WTC11 (cell line): ENCODE measurements at regions of chr2 and their contacts with region 1.

Region 1: DNA sequence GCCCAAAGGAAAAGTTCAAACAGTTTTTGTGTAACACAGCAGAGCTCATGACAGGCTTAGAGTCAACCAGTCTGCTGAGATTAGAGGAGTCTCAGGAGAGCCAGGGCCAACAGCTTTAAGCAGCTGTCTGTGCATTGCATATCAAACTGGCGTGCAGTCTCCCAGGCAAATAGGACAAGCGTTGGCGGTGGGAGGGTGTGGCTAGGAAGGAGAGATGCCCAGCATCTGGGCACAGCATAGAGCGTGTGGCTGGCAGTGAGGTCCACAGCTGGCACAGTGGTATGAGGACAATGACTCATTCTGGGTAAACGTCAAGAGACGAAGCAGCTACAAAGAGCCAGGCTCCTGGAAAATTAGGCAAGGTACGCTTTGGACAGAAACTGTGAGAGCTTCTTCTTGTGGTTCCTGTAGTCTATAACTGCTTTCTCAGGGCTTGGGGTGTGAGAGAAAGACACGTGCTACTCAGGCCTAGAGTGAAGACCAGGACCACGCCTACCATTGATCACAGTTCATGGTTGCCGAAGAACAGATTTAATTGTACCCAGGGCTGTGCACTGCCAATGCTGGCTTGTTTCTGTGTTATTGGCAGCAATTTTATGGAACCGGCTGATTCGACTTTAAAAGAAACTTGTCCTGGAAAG is 14.8 kb downstream of the ZAP70 start:
- DNase-seq: no peak
- ATAC-seq: no peak
- H3K4me3 Mint-ChIP-seq: no peak overlapping the region
- H3K27ac Mint-ChIP-seq: no peak overlapping the region
- H3K4me1 Mint-ChIP-seq: no peaks in the 10 kb centered on the region
- H3K27me3 Mint-ChIP-seq: no peaks in the 10 kb centered on the region; the same call in 1 of the 2 replicates
- CTCF ChIP-seq: no peak

Region 2: DNA sequence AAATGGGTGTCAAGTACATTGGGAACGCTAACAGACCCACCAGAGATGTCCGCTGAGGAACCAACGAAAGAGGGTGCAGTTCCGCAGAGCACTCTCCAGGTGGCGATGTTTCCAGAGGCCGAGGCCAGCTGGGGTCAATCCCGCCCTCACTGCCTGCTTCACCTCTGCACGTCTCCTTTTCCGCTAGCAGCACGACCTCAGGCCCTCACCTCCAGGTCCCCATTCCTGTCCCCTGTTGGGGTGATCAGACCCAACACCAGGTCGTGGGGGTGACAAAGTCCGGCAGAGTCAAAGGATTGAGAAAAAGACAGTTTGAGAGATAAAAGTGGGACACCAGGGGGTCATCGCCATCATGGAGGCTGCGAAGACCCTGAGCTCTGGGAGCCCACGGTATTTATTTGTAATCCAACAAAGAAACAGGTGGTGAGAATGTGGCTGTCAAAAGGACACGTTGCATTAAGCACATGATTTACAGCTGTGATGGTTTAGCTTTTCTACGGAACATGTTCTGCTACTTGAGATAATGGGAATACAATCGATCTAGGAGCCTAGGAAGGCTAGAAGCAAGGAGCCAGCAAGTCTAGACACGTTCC is 12.5 kb after region 1 on chr2:
- CTCF ChIA-PET with region 1: interaction called, 17 read pairs
- POLR2A ChIA-PET with region 1: no interaction called
- DNase-seq: peak; percentile 74
- ATAC-seq: peak; percentile 84
- H3K4me3 Mint-ChIP-seq: no peak overlapping the region
- H3K27ac Mint-ChIP-seq: no peak overlapping the region
- H3K4me1 Mint-ChIP-seq: peaks cover 15% of the 10 kb centered on the region
- H3K27me3 Mint-ChIP-seq: no peaks in the 10 kb centered on the region
- CTCF ChIP-seq: peak; percentile 86